ENCODE measurements at regions of chr14 and their contacts with region 1.

Region 1: GRCh38 chr14:54691525-54692283 is 124.8 kb downstream of the SAMD4A start:
- DNase-seq: peak; percentile 53 to 86
- H3K4me3 ChIP-seq: no peak overlapping the region
- H3K27ac ChIP-seq: no peak overlapping the region
- H3K4me1 ChIP-seq: peaks cover 0 to 6% (median 0%) of the 10 kb centered on the region in 4 experiments; a peak in 3 of 7 replicates
- H3K27me3 ChIP-seq: no peaks in the 10 kb centered on the region
- CTCF ChIP-seq: peak; percentile 92 to 98 (median 96)
- EP300 ChIP-seq: no peak
- POLR2A ChIP-seq: no peak
- RAD21 ChIP-seq: peak; percentile 95

Region 2: GRCh38 chr14:54572316-54572715 is 119.4 kb before region 1 on chr14:
- CTCF ChIA-PET with region 1: interaction called, 108 read pairs
- POLR2A ChIA-PET with region 1: interaction called, 17 read pairs
- DNase-seq: no peak
- H3K4me3 ChIP-seq: no peak overlapping the region
- H3K27ac ChIP-seq: no peak overlapping the region
- H3K4me1 ChIP-seq: peaks cover 2 to 8% (median 5%) of the 10 kb centered on the region in 4 experiments; a peak in 6 of 7 replicates
- H3K27me3 ChIP-seq: peaks cover 0 to 12% (median 5%) of the 10 kb centered on the region in 4 experiments; a peak in 4 of 7 replicates
- CTCF ChIP-seq: peak; percentile 20 to 94 (median 82)
- EP300 ChIP-seq: no peak
- POLR2A ChIP-seq: no peak
- RAD21 ChIP-seq: peak; percentile 97 to 98

Region 3: DNA sequence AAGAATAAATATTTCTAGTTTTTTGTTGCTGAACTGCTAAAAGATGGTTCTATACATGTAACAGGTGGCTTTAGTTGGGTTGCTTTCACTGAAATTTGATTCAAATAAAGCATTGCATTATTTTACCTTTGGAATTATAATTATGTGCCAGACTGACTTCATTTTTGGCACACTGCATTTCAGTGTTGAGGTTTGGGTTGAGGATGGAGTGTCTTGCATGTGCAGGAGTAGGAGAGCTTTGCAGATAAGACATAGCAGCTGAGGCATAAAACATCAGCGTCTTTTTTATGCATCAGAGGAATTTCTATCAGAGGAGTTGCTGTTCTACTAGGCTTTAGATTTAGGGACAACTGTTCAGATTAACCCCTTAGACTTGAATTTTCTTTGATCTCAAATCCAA is 107.6 kb before region 1 on chr14:
- CTCF ChIA-PET with region 1: interaction called, 108 read pairs
- POLR2A ChIA-PET with region 1: no interaction called
- DNase-seq: no peak
- H3K4me3 ChIP-seq: no peak overlapping the region
- H3K27ac ChIP-seq: no peak overlapping the region
- H3K4me1 ChIP-seq: no peaks in the 10 kb centered on the region
- H3K27me3 ChIP-seq: no peaks in the 10 kb centered on the region
- CTCF ChIP-seq: no peak
- EP300 ChIP-seq: no peak
- POLR2A ChIP-seq: no peak
- RAD21 ChIP-seq: no peak

Region 4: DNA sequence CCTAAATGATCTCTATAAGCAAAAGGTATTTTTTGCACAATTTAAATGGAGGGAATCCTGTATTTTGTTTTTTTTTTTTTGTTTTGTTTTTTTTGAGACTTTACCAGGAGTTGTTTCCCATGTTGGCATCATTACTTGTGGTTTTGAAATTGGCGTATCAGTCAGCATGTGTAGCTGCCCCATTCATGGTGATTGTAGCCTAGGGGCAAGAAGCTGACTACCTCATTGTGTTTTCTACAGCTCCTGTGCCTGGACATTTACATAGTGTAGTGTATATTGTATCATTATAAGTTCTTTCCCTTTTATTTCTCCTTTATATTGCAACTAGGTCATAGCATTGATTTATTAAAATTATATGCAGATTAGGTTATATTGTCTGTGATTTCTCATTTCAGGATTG is 100.2 kb before region 1 on chr14:
- CTCF ChIA-PET with region 1: interaction called, 14 read pairs
- POLR2A ChIA-PET with region 1: interaction called, 4 read pairs
- DNase-seq: no peak
- H3K4me3 ChIP-seq: no peak overlapping the region
- H3K27ac ChIP-seq: no peak overlapping the region
- H3K4me1 ChIP-seq: no peaks in the 10 kb centered on the region
- H3K27me3 ChIP-seq: no peaks in the 10 kb centered on the region
- CTCF ChIP-seq: no peak
- EP300 ChIP-seq: no peak
- POLR2A ChIP-seq: no peak
- RAD21 ChIP-seq: no peak

Region 5: GRCh38 chr14:54642801-54643697 is 48.7 kb before region 1 on chr14:
- CTCF ChIA-PET with region 1: interaction called, 25 read pairs
- POLR2A ChIA-PET with region 1: no interaction called
- DNase-seq: peak in 1 of 2 experiments; percentile 44
- H3K4me3 ChIP-seq: no peak overlapping the region
- H3K27ac ChIP-seq: no peak overlapping the region
- H3K4me1 ChIP-seq: peaks cover 0 to 9% (median 6%) of the 10 kb centered on the region in 4 experiments; a peak in 3 of 7 replicates
- H3K27me3 ChIP-seq: no peaks in the 10 kb centered on the region
- CTCF ChIP-seq: peak in 2 of 3 experiments; percentile 20 to 46; a peak in 2 of 4 replicates
- EP300 ChIP-seq: no peak
- POLR2A ChIP-seq: no peak
- RAD21 ChIP-seq: peak; percentile 53 to 54

Region 6: GRCh38 chr14:54652188-54652587 is 39.5 kb before region 1 on chr14:
- CTCF ChIA-PET with region 1: interaction called, 11 read pairs
- POLR2A ChIA-PET with region 1: no interaction called
- DNase-seq: peak in 1 of 2 experiments; percentile 76
- H3K4me3 ChIP-seq: peak overlapping the region in 1 of 4 experiments; percentile 29; a peak in 1 of 8 replicates
- H3K27ac ChIP-seq: peak overlapping the region; percentile 37; the same call in 1 of the 2 replicates
- H3K4me1 ChIP-seq: peaks cover 5 to 28% (median 9%) of the 10 kb centered on the region in 4 experiments; a peak in 6 of 7 replicates
- H3K27me3 ChIP-seq: no peaks in the 10 kb centered on the region
- CTCF ChIP-seq: no peak
- EP300 ChIP-seq: peak in 1 of 2 experiments; percentile 27; a peak in 1 of 3 replicates
- POLR2A ChIP-seq: no peak
- RAD21 ChIP-seq: no peak

Region 7: GRCh38 chr14:54669721-54670561 is 21.8 kb before region 1 on chr14:
- CTCF ChIA-PET with region 1: interaction called, 19 read pairs
- POLR2A ChIA-PET with region 1: no interaction called
- DNase-seq: no peak
- H3K4me3 ChIP-seq: no peak overlapping the region
- H3K27ac ChIP-seq: no peak overlapping the region
- H3K4me1 ChIP-seq: peaks cover 8 to 18% (median 13%) of the 10 kb centered on the region in 4 experiments
- H3K27me3 ChIP-seq: no peaks in the 10 kb centered on the region
- CTCF ChIP-seq: no peak
- EP300 ChIP-seq: no peak
- POLR2A ChIP-seq: no peak
- RAD21 ChIP-seq: no peak

Region 8: DNA sequence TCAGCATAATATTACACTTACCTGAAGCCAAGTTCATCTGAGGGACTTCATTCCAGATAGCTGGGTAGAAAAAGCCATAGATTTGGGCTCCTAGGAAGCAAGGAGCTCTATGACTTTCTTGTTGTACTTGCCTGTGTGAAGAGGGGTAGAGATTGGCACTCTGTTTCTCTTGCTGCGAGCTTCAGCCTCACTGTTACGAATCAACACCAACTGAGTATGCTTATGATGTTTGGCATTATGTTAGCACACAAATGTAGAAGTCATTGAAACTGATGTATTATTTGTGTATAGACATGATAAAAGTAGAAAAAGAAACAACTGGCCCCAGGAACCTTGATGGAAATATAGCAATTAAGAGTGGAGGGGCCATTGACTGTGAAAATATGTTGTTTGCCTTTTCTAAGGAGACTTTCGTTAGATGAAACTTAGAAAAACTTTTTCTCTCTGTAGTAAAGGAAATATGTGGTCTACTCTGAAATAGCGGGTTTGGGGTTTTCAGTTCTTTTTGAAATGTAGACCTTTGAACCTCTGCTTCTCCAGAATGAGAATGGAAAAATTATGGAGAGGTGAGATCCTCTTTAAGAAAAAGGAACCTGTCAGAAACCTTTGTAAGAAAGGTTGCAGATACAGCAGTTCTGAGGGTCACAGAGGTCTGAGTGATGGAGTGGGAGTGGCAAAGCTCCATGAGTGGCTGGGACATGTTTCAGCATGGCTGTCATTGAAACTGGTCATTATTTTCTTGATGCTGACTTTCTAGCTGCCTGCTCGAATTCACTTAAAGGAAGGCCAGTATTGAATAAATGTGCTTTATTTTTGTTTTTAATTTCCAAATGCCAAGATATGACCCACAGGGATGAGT is 51.0 kb after region 1 on chr14:
- CTCF ChIA-PET with region 1: no interaction called
- POLR2A ChIA-PET with region 1: no interaction called
- DNase-seq: no peak
- H3K4me3 ChIP-seq: no peak overlapping the region
- H3K27ac ChIP-seq: no peak overlapping the region
- H3K4me1 ChIP-seq: no peaks in the 10 kb centered on the region
- H3K27me3 ChIP-seq: no peaks in the 10 kb centered on the region
- CTCF ChIP-seq: no peak
- EP300 ChIP-seq: no peak
- POLR2A ChIP-seq: no peak
- RAD21 ChIP-seq: no peak

Region 9: GRCh38 chr14:54796961-54797360 is 105.3 kb after region 1 on chr14:
- CTCF ChIA-PET with region 1: no interaction called
- POLR2A ChIA-PET with region 1: no interaction called
- DNase-seq: no peak
- H3K4me3 ChIP-seq: no peak overlapping the region
- H3K27ac ChIP-seq: no peak overlapping the region
- H3K4me1 ChIP-seq: no peaks in the 10 kb centered on the region
- H3K27me3 ChIP-seq: no peaks in the 10 kb centered on the region; a peak in 1 of 7 replicates
- CTCF ChIP-seq: no peak
- EP300 ChIP-seq: no peak
- POLR2A ChIP-seq: no peak
- RAD21 ChIP-seq: no peak